ENCODE measurements at regions of chr2 and their contacts with region 1.

Region 1: GRCh38 chr2:218292048-218293014 is at the start of gene TMBIM1:
- DNase-seq: peak; percentile 72
- ATAC-seq: peak; percentile 84
- H3K4me3 ChIP-seq: peak within 1 kb of the TSS; percentile 83 to 99 (median 95)
- H3K27ac ChIP-seq: peak within 1 kb of the TSS; percentile 88
- H3K4me1 ChIP-seq: peaks cover 88% of the 10 kb centered on the region
- H3K27me3 ChIP-seq: no peaks in the 10 kb centered on the region; a peak in 1 of 5 replicates
- CTCF ChIP-seq: peak; percentile 72
- EP300 ChIP-seq: peak; percentile 38 to 73; a peak in 3 of 4 replicates
- POLR2A ChIP-seq: peak; percentile 77 to 88
- RAD21 ChIP-seq: peak; percentile 96
- total RNA-seq, gene TMBIM1: 69.7 and 139 TPM in 2 replicates

Region 2: GRCh38 chr2:218312267-218312756 is 20.0 kb after region 1 on chr2:
- CTCF ChIA-PET with region 1: interaction called, 3 read pairs
- POLR2A ChIA-PET with region 1: interaction called, 19 read pairs
- in situ Hi-C with region 1: no loop called
- intact Hi-C with region 1: no loop called
- DNase-seq: peak; percentile 87
- ATAC-seq: peak; percentile 80
- H3K4me3 ChIP-seq: peak overlapping the region in 1 of 3 experiments; percentile 47; a peak in 1 of 6 replicates
- H3K27ac ChIP-seq: peak overlapping the region; percentile 58
- H3K4me1 ChIP-seq: peaks cover 77% of the 10 kb centered on the region
- H3K27me3 ChIP-seq: no peaks in the 10 kb centered on the region
- CTCF ChIP-seq: no peak
- EP300 ChIP-seq: no peak; a peak in 1 of 4 replicates
- POLR2A ChIP-seq: no peak
- RAD21 ChIP-seq: no peak

Region 3: DNA sequence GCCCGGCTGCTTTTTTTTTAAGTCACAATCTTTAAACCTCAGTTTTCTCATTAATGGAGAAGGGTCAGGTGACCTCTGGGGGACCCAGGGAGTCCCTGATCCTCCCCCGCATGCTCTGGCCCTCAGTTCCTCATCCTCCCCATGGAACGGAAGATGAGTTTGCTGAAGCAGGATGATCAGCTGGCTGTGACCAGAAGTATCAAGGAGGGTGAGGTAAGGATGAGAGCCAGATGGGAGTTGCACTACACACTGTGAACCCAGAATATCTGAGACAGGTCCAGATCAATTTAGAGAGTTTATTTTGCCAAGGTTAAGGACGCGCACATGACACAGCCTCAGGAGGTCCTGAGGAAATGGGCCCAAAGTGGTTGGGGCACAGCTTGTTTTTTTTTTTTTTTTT is 68.1 kb after region 1 on chr2:
- CTCF ChIA-PET with region 1: interaction called, 3 read pairs
- POLR2A ChIA-PET with region 1: interaction called, 9 read pairs
- in situ Hi-C with region 1: no loop called
- intact Hi-C with region 1: loop called (anchors 2 kb)
- DNase-seq: no peak
- ATAC-seq: no peak
- H3K4me3 ChIP-seq: no peak overlapping the region
- H3K27ac ChIP-seq: no peak overlapping the region
- H3K4me1 ChIP-seq: peaks cover 65% of the 10 kb centered on the region
- H3K27me3 ChIP-seq: no peaks in the 10 kb centered on the region; a peak in 3 of 5 replicates
- CTCF ChIP-seq: no peak
- EP300 ChIP-seq: no peak
- POLR2A ChIP-seq: no peak
- RAD21 ChIP-seq: no peak

Region 4: GRCh38 chr2:218406209-218406948 is 114.0 kb after region 1 on chr2:
- CTCF ChIA-PET with region 1: no interaction called
- POLR2A ChIA-PET with region 1: interaction called, 30 read pairs
- in situ Hi-C with region 1: no loop called
- intact Hi-C with region 1: no loop called
- DNase-seq: peak; percentile 92
- ATAC-seq: peak; percentile 78
- H3K4me3 ChIP-seq: peak overlapping the region; percentile 67 to 86 (median 67)
- H3K27ac ChIP-seq: peak overlapping the region; percentile 79
- H3K4me1 ChIP-seq: peaks cover 61% of the 10 kb centered on the region
- H3K27me3 ChIP-seq: no peaks in the 10 kb centered on the region
- CTCF ChIP-seq: peak; percentile 98
- EP300 ChIP-seq: peak; percentile 37 to 53; a peak in 2 of 4 replicates
- POLR2A ChIP-seq: peak in 1 of 2 experiments; percentile 23; a peak in 1 of 4 replicates
- RAD21 ChIP-seq: peak; percentile 98

Region 5: GRCh38 chr2:218466016-218466521 is 173.7 kb after region 1 on chr2:
- CTCF ChIA-PET with region 1: no interaction called
- POLR2A ChIA-PET with region 1: no interaction called
- in situ Hi-C with region 1: no loop called
- intact Hi-C with region 1: loop called (anchors 5 kb)
- DNase-seq: peak; percentile 34
- ATAC-seq: peak; percentile 69
- H3K4me3 ChIP-seq: no peak overlapping the region
- H3K27ac ChIP-seq: no peak overlapping the region
- H3K4me1 ChIP-seq: 0 out of 2 replicates have a peak, but pooled peaks cover 3% of the 10 kb centered on the region
- H3K27me3 ChIP-seq: no peaks in the 10 kb centered on the region
- CTCF ChIP-seq: peak; percentile 68
- EP300 ChIP-seq: no peak
- POLR2A ChIP-seq: no peak
- RAD21 ChIP-seq: no peak

Region 6: DNA sequence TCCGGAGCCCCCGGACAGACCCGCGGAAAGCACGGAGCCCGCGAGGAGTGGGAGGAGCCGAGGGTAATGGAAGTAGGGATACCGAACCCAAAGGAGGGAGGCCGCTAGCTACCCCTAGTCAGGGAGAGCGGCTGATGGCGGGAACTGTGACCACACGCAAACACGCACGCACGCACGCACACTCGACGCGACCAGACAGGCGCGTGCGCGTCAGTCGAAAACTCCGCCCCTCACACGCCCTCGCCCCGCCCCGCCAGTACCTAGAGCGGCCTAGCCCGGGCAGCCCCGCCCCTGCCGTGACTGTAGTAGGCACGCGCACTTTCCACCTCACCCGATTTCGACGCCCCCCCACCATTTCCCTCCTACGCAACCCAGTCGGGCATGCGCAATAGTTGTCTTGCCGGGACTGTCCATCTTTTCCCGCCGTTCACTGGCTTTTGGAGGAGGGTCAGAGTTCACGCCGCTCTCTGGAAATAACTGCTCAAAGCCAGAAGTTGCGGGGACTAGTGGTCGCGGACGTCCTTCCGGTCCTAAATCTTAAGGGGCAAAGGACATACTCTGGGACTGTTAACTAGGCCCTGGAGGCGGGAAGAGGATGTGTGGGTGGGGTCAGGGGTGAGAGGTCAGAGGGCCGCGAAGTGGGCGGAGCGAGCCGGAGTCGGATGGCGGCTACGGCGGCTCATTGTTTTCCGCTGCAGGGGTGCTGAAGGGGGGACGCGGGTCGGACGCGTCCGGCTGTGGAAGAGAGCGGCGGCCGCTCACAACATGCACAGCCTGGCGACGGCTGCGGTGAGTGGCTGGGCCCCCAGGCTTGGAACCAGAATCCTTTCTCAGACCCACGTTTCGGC is 276.1 kb after region 1 on chr2 and contains the starts of genes CNOT9 and USP37:
- CTCF ChIA-PET with region 1: no interaction called
- POLR2A ChIA-PET with region 1: no interaction called
- in situ Hi-C with region 1: no loop called
- intact Hi-C with region 1: loop called (anchors 10 kb)
- DNase-seq: peak; percentile 98
- ATAC-seq: peak; percentile 90
- H3K4me3 ChIP-seq: peak within 1 kb of the TSS; percentile 89 to 97 (median 91)
- H3K27ac ChIP-seq: peak within 1 kb of the TSS; percentile 97
- H3K4me1 ChIP-seq: peaks cover 63% of the 10 kb centered on the region
- H3K27me3 ChIP-seq: peaks cover 0 to 6% of the 10 kb centered on the region in 2 experiments; a peak in 1 of 5 replicates
- CTCF ChIP-seq: no peak; the same call in 1 of the 2 replicates
- EP300 ChIP-seq: peak; percentile 67 to 70; a peak in 3 of 4 replicates
- POLR2A ChIP-seq: peak; percentile 92 to 98
- RAD21 ChIP-seq: 0 out of 2 replicates have a peak, but pooled peaks have one; percentile 24
- total RNA-seq, gene CNOT9: 92.4 and 101 TPM in 2 replicates
- total RNA-seq, gene USP37: 30.6 and 36.2 TPM in 2 replicates

Region 7: DNA sequence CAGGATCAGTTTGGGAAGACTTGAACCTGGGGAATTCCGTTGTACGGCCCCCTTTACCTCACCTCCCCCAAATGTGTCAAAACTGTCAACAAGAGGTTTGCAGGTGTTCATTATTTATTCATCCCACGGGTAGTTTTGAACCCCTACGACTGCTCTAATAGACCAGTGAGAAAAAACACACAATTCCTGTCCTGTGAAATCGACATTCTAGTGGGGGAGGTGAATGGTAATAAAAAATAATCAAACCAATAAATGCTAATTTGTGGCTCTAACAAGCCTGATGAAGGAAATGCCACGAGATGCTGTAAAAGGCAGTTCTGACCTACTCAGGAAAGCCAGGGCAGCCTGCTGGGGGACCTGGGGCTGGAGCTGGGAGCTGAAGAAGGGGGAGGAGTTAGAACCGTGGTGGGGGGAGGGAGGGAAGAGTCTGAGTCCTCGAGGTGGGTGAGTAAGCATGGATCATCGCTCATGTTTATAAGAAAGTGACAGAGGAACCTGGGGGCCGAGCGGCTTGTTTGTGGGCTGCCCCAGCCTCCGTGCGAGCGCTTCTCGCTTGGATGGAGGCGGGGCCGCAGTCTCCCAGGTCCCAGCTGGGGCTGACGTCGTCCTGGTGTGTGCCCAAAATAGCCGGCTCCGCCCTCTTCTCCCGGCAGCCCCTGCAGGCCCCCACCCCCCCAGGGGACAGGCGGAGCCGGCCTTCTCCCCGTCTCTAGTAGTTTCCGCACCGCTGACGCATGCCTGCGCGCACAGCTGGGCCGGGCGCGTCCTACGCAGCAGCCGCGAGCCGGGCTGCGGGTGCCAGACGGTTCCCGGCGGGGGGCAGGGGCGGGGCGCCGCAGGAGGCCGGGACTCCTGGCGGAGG is 986.6 kb after region 1 on chr2 and contains the start of gene DNAJB2:
- CTCF ChIA-PET with region 1: no interaction called
- POLR2A ChIA-PET with region 1: no interaction called
- in situ Hi-C with region 1: no loop called
- intact Hi-C with region 1: no loop called
- DNase-seq: peak; percentile 93
- ATAC-seq: peak; percentile 92
- H3K4me3 ChIP-seq: peak within 1 kb of the TSS; percentile 59 to 77 (median 73)
- H3K27ac ChIP-seq: peak within 1 kb of the TSS; percentile 62
- H3K4me1 ChIP-seq: peaks cover 37% of the 10 kb centered on the region
- H3K27me3 ChIP-seq: 0 out of 5 replicates have a peak, but pooled peaks cover 0 to 5% of the 10 kb centered on the region in 2 experiments
- CTCF ChIP-seq: no peak; the same call in 1 of the 2 replicates
- EP300 ChIP-seq: no peak; a peak in 1 of 4 replicates
- POLR2A ChIP-seq: peak; percentile 52 to 79; a peak in 3 of 4 replicates
- RAD21 ChIP-seq: no peak
- total RNA-seq, gene DNAJB2: 18.6 and 21.3 TPM in 2 replicates

Measured in HepG2 (cell line).